PC-9 (cell line): ENCODE measurements at regions of chr11 and their contacts with region 1.

Region 1: GRCh38 chr11:118928108-118928870 is 2.6 kb upstream of the BCL9L start:
- DNase-seq: peak; percentile 91 to 97
- H3K4me3 ChIP-seq: peak overlapping the region; percentile 84
- H3K27ac ChIP-seq: peak overlapping the region; percentile 64
- H3K4me1 ChIP-seq: peaks cover 32% of the 10 kb centered on the region
- H3K27me3 ChIP-seq: no peaks in the 10 kb centered on the region
- CTCF ChIP-seq: peak; percentile 99

Region 2: GRCh38 chr11:118435893-118436624 is 492.2 kb before region 1 on chr11 and contains the start of gene KMT2A:
- CTCF ChIA-PET with region 1: no interaction called
- POLR2A ChIA-PET with region 1: no interaction called
- intact Hi-C with region 1: no loop called
- DNase-seq: peak; percentile 90 to 98
- H3K4me3 ChIP-seq: peak within 1 kb of the TSS; percentile 69
- H3K27ac ChIP-seq: peak within 1 kb of the TSS; percentile 60
- H3K4me1 ChIP-seq: peaks cover 41% of the 10 kb centered on the region
- H3K27me3 ChIP-seq: no peaks in the 10 kb centered on the region
- CTCF ChIP-seq: no peak
- total RNA-seq, gene KMT2A: 78.7 and 80.3 TPM in 2 replicates

Region 3: DNA sequence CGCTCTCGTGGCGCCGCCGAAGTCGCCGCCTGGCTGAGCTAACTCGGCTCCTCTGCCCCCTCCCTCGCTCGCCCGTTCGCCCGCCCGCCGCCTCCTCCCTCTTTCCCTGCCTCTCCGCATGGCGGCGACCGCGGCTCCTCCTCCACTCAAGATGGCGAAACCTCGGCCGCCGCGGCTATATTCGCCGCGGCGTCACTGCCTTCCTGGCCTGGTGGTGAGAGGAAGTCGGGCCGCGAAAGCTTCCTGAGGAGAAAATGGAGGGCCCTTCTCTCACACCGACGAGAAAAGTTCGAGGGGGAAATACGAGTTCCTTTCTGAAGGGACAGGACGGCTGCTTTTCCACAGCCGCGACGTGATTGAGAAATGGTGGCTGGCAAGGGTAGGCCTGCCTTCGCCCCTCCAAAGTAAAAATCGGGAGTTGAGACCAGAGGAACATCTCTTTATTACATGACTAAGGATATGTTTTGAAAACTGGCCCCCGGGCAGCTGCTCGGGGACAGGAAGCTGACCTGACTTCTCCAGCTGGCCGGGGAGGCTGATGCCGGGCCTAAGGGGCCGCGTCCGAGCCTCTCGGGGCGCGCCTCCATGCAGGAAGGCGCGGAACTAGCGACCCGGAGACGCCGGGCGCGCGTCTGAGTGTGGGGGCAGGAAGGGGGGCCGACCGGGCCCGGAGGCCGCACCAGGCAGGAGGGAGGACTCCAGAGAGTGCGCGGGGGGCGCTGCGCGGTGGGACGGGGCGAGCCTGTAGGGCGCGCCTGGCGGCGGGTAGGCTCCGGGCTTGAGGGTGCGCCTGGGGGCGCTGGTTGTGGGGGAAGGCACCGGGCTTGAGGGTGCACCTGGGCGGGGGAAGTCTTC is 137.0 kb before region 1 on chr11 and contains the start of gene DDX6:
- CTCF ChIA-PET with region 1: no interaction called
- POLR2A ChIA-PET with region 1: no interaction called
- intact Hi-C with region 1: loop called (anchors 2 kb)
- DNase-seq: peak; percentile 73 to 85
- H3K4me3 ChIP-seq: peak within 1 kb of the TSS; percentile 98
- H3K27ac ChIP-seq: peak within 1 kb of the TSS; percentile 85
- H3K4me1 ChIP-seq: peaks cover 20% of the 10 kb centered on the region
- H3K27me3 ChIP-seq: no peaks in the 10 kb centered on the region
- CTCF ChIP-seq: peak; percentile 53
- total RNA-seq, gene DDX6: 73.1 and 84.4 TPM in 2 replicates

Region 4: DNA sequence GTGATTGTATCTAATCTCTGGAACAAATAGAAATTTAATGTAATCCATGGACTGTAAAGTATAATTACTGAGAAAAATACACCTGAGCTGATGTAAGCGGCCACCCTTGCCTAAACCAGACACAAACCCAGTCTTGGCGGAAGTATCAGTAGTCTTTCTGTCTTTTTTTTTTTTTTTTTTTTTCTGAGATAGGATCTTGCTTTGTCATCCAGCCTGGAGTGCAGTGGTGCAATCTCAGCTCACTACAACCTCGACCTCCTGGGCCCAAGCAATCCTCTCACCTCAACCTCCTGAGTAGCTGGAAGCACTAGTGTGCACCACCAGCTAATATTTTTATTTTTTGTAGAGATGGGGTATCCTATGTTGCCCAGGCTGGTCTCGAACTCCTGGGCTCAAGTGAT is 50.1 kb before region 1 on chr11:
- CTCF ChIA-PET with region 1: no interaction called
- POLR2A ChIA-PET with region 1: no interaction called
- intact Hi-C with region 1: no loop called
- DNase-seq: peak in 1 of 2 experiments; percentile 65
- H3K4me3 ChIP-seq: no peak overlapping the region
- H3K27ac ChIP-seq: peak overlapping the region; percentile 57
- H3K4me1 ChIP-seq: peaks cover 14% of the 10 kb centered on the region; the same call in 1 of the 2 replicates
- H3K27me3 ChIP-seq: no peaks in the 10 kb centered on the region
- CTCF ChIP-seq: no peak

Region 5: GRCh38 chr11:118939953-118940598 is 11.8 kb after region 1 on chr11:
- CTCF ChIA-PET with region 1: no interaction called
- POLR2A ChIA-PET with region 1: no interaction called
- intact Hi-C with region 1: loop called (anchors 1 kb)
- DNase-seq: peak in 1 of 2 experiments; percentile 19
- H3K4me3 ChIP-seq: no peak overlapping the region
- H3K27ac ChIP-seq: no peak overlapping the region
- H3K4me1 ChIP-seq: peaks cover 19% of the 10 kb centered on the region
- H3K27me3 ChIP-seq: no peaks in the 10 kb centered on the region
- CTCF ChIP-seq: no peak

Region 6: GRCh38 chr11:119018074-119018938 is 90.0 kb after region 1 on chr11 and contains the starts of genes RPS25 and TRAPPC4:
- CTCF ChIA-PET with region 1: no interaction called
- POLR2A ChIA-PET with region 1: no interaction called
- intact Hi-C with region 1: loop called (anchors 2 kb)
- DNase-seq: peak; percentile 89 to 96
- H3K4me3 ChIP-seq: peak within 1 kb of the TSS; percentile 98
- H3K27ac ChIP-seq: peak within 1 kb of the TSS; percentile 78
- H3K4me1 ChIP-seq: peaks cover 36% of the 10 kb centered on the region
- H3K27me3 ChIP-seq: no peaks in the 10 kb centered on the region
- CTCF ChIP-seq: no peak
- total RNA-seq, gene RPS25: 954 and 984 TPM in 2 replicates
- total RNA-seq, gene TRAPPC4: 49.2 and 51.4 TPM in 2 replicates

Region 7: DNA sequence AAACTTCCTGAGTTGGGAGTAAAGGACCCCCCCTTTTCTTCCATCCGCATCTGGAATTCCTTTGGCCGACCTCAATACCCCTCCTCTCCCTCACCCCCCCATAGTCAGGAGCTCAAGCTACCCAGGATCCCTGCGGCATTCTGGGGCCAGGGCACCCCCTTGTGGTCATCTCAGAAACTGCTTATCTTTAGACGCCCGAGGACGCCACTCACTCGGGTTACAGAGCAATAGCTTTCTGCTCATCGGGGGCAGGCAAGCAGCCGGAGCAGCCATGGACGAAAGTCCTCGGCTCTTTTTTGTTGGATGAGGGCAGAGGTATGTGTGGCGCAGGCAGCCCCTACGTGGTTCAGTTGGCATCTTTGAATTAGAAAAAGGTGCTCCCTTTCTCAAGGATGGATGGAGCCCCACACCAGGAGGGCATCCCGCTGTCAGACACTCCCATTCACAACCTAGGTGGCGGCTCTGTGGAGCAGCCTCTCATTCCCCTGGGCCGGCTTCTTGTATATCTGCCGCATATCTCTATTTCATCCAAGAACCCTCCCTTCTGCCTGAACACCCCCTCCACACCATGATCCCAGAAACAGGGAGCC is 410.1 kb after region 1 on chr11:
- CTCF ChIA-PET with region 1: no interaction called
- POLR2A ChIA-PET with region 1: no interaction called
- intact Hi-C with region 1: loop called (anchors 5 kb)
- DNase-seq: peak; percentile 58 to 63
- H3K4me3 ChIP-seq: no peak overlapping the region
- H3K27ac ChIP-seq: no peak overlapping the region
- H3K4me1 ChIP-seq: peaks cover 16% of the 10 kb centered on the region
- H3K27me3 ChIP-seq: peaks cover 10% of the 10 kb centered on the region
- CTCF ChIP-seq: peak; percentile 94